ENCODE measurements at regions of chr12 and their contacts with region 1.

Region 1: GRCh38 chr12:52023182-52023975 is 16.6 kb downstream of the TAMALIN start:
- DNase-seq: peak; percentile 78
- ATAC-seq: peak; percentile 64
- H3K4me3 ChIP-seq: peak overlapping the region; percentile 79
- H3K27ac ChIP-seq: no peak overlapping the region
- H3K4me1 ChIP-seq: peaks cover 18% of the 10 kb centered on the region
- H3K27me3 ChIP-seq: no peaks in the 10 kb centered on the region
- CTCF ChIP-seq: peak; percentile 93

Region 2: DNA sequence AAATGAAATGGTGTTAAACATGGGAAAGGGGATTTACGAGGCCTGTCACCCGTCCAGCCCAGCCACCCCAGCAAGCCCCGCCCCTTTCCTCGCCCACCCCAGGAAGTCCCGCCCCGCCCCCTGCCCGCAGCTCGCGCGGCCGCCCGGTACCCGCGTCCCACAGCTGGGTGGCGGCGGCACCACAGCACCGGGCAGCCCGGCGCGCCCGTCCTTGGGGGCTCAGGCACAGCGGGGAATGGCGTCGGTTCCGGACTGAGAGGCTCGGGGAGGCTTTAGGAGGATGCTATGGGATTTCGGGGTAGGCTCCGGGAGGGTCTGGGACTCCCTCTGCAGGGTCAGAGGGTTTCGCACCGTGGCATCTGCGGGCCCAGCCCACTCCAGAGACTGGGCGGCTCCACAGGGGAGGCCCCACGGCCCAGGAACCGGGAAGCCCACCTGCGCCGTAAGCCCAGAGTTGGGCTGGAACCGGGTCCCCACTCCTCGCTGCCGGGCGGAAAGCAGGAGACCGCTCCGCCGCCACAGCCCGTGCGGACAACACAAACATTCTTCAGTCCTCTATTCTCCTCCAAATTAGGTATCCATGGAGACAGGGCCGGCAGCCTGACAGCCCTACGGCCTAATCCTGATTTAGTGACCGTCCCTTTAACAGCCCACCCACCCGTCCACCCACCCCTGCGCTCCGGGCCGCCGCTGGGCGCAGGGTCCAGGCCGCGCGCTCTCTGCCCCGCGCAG is 176.3 kb before region 1 on chr12:
- CTCF ChIA-PET with region 1: no interaction called
- POLR2A ChIA-PET with region 1: no interaction called
- intact Hi-C with region 1: no loop called
- DNase-seq: no peak
- ATAC-seq: peak; percentile 49
- H3K4me3 ChIP-seq: peak overlapping the region; percentile 76
- H3K27ac ChIP-seq: no peak overlapping the region
- H3K4me1 ChIP-seq: no peaks in the 10 kb centered on the region
- H3K27me3 ChIP-seq: peaks cover 32% of the 10 kb centered on the region
- CTCF ChIP-seq: no peak

Region 3: GRCh38 chr12:51994959-51995358 is 28.4 kb before region 1 on chr12:
- CTCF ChIA-PET with region 1: interaction called, 13 read pairs
- POLR2A ChIA-PET with region 1: no interaction called
- intact Hi-C with region 1: loop called (anchors 1 kb)
- DNase-seq: no peak
- ATAC-seq: no peak
- H3K4me3 ChIP-seq: no peak overlapping the region
- H3K27ac ChIP-seq: no peak overlapping the region
- H3K4me1 ChIP-seq: no peaks in the 10 kb centered on the region
- H3K27me3 ChIP-seq: no peaks in the 10 kb centered on the region
- CTCF ChIP-seq: no peak

Region 4: GRCh38 chr12:52036587-52037171 is 13.3 kb after region 1 on chr12:
- CTCF ChIA-PET with region 1: interaction called, 20 read pairs
- POLR2A ChIA-PET with region 1: no interaction called
- intact Hi-C with region 1: no loop called
- DNase-seq: peak; percentile 81
- ATAC-seq: peak; percentile 57
- H3K4me3 ChIP-seq: peak overlapping the region; percentile 59
- H3K27ac ChIP-seq: peak overlapping the region; percentile 61
- H3K4me1 ChIP-seq: peaks cover 29% of the 10 kb centered on the region
- H3K27me3 ChIP-seq: no peaks in the 10 kb centered on the region
- CTCF ChIP-seq: no peak

Region 5: GRCh38 chr12:52069327-52070184 is 46.2 kb after region 1 on chr12 and contains the start of gene ATG101:
- CTCF ChIA-PET with region 1: interaction called, 22 read pairs
- POLR2A ChIA-PET with region 1: interaction called, 5 read pairs
- intact Hi-C with region 1: loop called (anchors 1 kb)
- DNase-seq: peak; percentile 95
- ATAC-seq: peak; percentile 98
- H3K4me3 ChIP-seq: peak within 1 kb of the TSS; percentile 83
- H3K27ac ChIP-seq: peak within 1 kb of the TSS; percentile 66
- H3K4me1 ChIP-seq: peaks cover 19% of the 10 kb centered on the region
- H3K27me3 ChIP-seq: no peaks in the 10 kb centered on the region
- CTCF ChIP-seq: peak; percentile 80
- total RNA-seq, gene ATG101: 110 and 167 TPM in 2 replicates

Region 6: DNA sequence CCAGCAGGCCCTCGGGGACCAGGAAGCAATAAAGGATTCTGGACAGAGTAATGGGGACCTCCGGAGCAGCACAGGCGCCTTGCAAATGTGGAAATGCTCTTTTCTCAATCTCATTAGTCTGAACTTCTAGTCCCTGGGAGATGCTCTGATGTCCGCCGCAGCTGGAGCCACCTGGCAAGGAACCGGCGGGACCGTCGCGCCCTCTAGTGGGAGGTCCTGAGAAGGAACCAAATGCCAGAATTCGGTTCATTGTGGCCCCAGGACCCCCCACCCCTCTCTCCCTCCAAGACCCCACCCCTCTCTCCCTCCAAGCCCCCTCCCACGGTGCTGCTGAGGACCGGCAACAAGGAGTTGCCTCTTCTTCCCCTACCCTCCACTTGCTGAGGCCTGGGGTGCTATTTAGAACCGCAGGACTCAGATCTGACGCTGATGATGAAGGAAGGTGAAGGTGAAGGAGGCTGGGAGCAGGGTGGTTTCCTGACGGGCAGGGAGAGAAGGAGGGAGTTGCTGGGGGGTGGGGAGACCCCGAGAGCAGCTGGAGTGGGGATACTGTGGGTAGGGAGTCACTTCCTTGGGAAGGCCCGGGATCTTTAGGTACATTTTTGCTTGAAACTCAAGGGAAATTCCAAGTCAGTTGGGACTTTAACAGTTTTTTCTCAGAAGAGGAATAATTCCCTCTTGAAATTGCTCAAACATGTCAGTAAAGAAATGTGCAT is 98.6 kb after region 1 on chr12:
- CTCF ChIA-PET with region 1: interaction called, 25 read pairs
- POLR2A ChIA-PET with region 1: no interaction called
- intact Hi-C with region 1: no loop called
- DNase-seq: peak; percentile 70
- ATAC-seq: peak; percentile 42
- H3K4me3 ChIP-seq: no peak overlapping the region
- H3K27ac ChIP-seq: no peak overlapping the region
- H3K4me1 ChIP-seq: peaks cover 24% of the 10 kb centered on the region
- H3K27me3 ChIP-seq: no peaks in the 10 kb centered on the region
- CTCF ChIP-seq: peak; percentile 81

Measured in PC-3 (cell line).